Activated naive CD4-positive, alpha-beta T cell treated with anti-CD3 and anti-CD28 coated beads for 36 hours (primary cell): ENCODE measurements at regions of chr3 and their contacts with region 1.

Region 1: DNA sequence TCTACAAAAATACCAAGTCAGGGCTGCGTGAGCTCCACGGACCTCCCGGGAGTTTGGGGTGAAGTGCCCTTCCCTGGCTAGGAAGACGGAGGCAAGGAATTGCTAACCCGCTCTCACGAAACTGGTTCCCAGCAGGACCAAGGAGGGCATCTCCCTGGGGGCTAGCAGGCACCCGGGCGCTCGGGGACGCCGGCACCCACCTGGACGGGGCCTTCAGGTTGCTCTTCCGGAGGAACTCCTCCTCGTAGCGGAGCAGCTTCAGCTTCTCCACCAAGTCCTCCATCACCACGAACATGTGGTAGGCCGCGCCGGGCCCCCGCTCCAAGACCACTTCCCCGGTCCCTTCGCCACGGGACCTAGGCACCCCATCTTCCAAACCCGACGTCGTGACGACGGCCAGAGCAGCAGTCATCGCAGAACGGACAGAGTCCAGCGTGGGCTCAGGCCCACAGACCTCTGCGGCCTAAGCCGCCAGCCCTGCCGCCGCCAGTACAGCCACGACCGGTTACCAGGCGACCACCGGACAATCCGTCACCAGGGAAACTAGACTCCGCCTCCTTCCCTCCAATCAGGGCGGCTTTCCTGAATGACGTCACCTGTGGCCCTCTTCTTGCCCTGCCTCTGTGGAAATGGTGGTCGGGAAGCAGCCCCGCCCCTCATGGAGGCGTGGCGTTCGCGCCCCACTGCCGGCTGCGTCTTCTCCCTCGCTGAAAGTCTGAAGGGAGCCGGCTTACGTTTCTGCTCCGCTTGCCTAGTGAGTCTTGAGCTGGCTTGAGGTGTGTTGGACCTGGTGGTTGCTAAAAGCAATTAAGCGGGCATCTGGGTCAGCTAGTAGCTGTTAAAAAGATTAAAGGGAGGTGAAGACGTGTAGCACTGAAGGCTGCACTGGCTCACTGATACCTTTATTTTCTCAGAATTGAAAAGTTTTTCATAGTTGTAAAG is at the start of gene IFT57:
- DNase-seq: peak; percentile 95
- H3K4me3 Mint-ChIP-seq: peak within 1 kb of the TSS; percentile 97
- H3K27ac Mint-ChIP-seq: peak within 1 kb of the TSS; percentile 97
- H3K4me1 Mint-ChIP-seq: peaks cover 42% of the 10 kb centered on the region
- H3K27me3 Mint-ChIP-seq: no peaks in the 10 kb centered on the region
- total RNA-seq, gene IFT57: 26.2 to 27.7 TPM

Region 2: GRCh38 chr3:107522510-107523288 is 699.5 kb before region 1 on chr3 and contains the start of gene BBX:
- CTCF ChIA-PET with region 1: no interaction called
- intact Hi-C with region 1: loop called (anchors 2 kb)
- DNase-seq: peak; percentile 94
- H3K4me3 Mint-ChIP-seq: peak within 1 kb of the TSS; percentile 92
- H3K27ac Mint-ChIP-seq: peak within 1 kb of the TSS; percentile 94
- H3K4me1 Mint-ChIP-seq: peaks cover 23% of the 10 kb centered on the region
- H3K27me3 Mint-ChIP-seq: no peaks in the 10 kb centered on the region
- total RNA-seq, gene BBX: 43.1 to 48.6 TPM

Region 3: GRCh38 chr3:108124337-108125152 is 97.6 kb before region 1 on chr3:
- CTCF ChIA-PET with region 1: no interaction called
- intact Hi-C with region 1: loop called (anchors 1 kb)
- DNase-seq: peak; percentile 84
- H3K4me3 Mint-ChIP-seq: peak overlapping the region; percentile 90
- H3K27ac Mint-ChIP-seq: peak overlapping the region; percentile 100
- H3K4me1 Mint-ChIP-seq: peaks cover 56% of the 10 kb centered on the region
- H3K27me3 Mint-ChIP-seq: no peaks in the 10 kb centered on the region

Region 4: DNA sequence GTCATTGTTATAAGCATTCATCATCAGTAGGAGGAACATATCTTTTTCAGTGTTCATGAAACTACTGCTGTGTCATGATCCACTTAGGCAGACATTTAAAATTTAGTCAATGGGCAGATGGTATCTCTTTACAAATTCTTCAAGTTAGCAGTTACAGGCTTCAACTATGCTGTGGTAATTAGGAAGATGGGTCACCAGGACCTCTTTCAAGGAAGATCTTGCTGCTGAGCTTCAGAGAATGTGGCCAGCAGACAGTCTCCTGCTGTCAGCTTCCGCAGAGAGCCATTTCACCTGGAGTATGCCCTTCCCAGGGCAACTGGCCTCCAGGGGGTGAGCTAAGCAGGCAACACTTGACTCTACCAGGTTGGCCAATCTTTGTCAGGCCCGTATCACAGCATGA is 19.3 kb before region 1 on chr3:
- CTCF ChIA-PET with region 1: no interaction called
- intact Hi-C with region 1: loop called (anchors 2 kb)
- DNase-seq: no peak
- H3K4me3 Mint-ChIP-seq: no peak overlapping the region
- H3K27ac Mint-ChIP-seq: no peak overlapping the region
- H3K4me1 Mint-ChIP-seq: peaks cover 24% of the 10 kb centered on the region
- H3K27me3 Mint-ChIP-seq: no peaks in the 10 kb centered on the region

Region 5: GRCh38 chr3:108415661-108416060 is 193.5 kb after region 1 on chr3:
- CTCF ChIA-PET with region 1: no interaction called
- intact Hi-C with region 1: loop called (anchors 1 kb)
- DNase-seq: no peak
- H3K4me3 Mint-ChIP-seq: no peak overlapping the region
- H3K27ac Mint-ChIP-seq: no peak overlapping the region
- H3K4me1 Mint-ChIP-seq: peaks cover 18% of the 10 kb centered on the region
- H3K27me3 Mint-ChIP-seq: peaks cover 12% of the 10 kb centered on the region

Region 6: GRCh38 chr3:108835101-108835500 is 612.9 kb after region 1 on chr3:
- CTCF ChIA-PET with region 1: no interaction called
- intact Hi-C with region 1: loop called (anchors 5 kb)
- DNase-seq: peak; percentile 66
- H3K4me3 Mint-ChIP-seq: peak overlapping the region; percentile 81
- H3K27ac Mint-ChIP-seq: peak overlapping the region; percentile 93
- H3K4me1 Mint-ChIP-seq: peaks cover 77% of the 10 kb centered on the region
- H3K27me3 Mint-ChIP-seq: no peaks in the 10 kb centered on the region

Region 7: DNA sequence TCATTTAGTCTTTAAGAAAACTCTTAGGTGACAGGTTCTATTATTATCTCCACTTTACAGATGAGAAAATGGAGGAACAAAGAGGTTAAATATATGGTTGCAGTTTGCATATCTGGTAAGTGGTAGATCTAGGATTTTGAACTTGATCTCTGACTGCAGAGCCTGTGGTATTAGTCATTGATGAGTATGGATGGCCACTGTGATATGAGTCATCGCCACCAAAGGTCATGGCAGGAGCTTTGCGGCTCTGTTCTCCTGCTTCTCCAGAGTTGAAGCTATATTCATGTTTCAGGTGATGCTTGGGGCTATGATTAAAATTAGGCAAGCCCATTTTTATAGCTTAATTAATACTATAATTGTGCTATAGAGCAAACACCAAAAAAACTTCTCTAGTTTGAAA is 1421.4 kb after region 1 on chr3:
- CTCF ChIA-PET with region 1: no interaction called
- intact Hi-C with region 1: no loop called
- DNase-seq: no peak
- H3K4me3 Mint-ChIP-seq: no peak overlapping the region
- H3K27ac Mint-ChIP-seq: no peak overlapping the region
- H3K4me1 Mint-ChIP-seq: no peaks in the 10 kb centered on the region
- H3K27me3 Mint-ChIP-seq: peaks cover 12% of the 10 kb centered on the region